Activated CD8-positive, alpha-beta T cell treated with anti-CD3 and anti-CD28 coated beads, Interleukin-2, amount 10 ng/mL, durations not matched to agents 7 days and 5 days (primary cell): ENCODE measurements at regions of chr22 and their contacts with region 1.

Region 1: GRCh38 chr22:17095538-17095937 is 10.7 kb downstream of the IL17RA start:
- DNase-seq: no peak
- ATAC-seq: no peak
- H3K4me3 Mint-ChIP-seq: no peak overlapping the region
- H3K27ac Mint-ChIP-seq: no peak overlapping the region
- H3K4me1 Mint-ChIP-seq: peaks cover 83% of the 10 kb centered on the region
- H3K27me3 Mint-ChIP-seq: no peaks in the 10 kb centered on the region

Region 2: GRCh38 chr22:17047656-17048055 is 47.9 kb before region 1 on chr22:
- CTCF ChIA-PET with region 1: no interaction called
- POLR2A ChIA-PET with region 1: no interaction called
- DNase-seq: no peak
- ATAC-seq: no peak
- H3K4me3 Mint-ChIP-seq: no peak overlapping the region
- H3K27ac Mint-ChIP-seq: no peak overlapping the region
- H3K4me1 Mint-ChIP-seq: no peaks in the 10 kb centered on the region
- H3K27me3 Mint-ChIP-seq: peaks cover 11% of the 10 kb centered on the region

Region 3: DNA sequence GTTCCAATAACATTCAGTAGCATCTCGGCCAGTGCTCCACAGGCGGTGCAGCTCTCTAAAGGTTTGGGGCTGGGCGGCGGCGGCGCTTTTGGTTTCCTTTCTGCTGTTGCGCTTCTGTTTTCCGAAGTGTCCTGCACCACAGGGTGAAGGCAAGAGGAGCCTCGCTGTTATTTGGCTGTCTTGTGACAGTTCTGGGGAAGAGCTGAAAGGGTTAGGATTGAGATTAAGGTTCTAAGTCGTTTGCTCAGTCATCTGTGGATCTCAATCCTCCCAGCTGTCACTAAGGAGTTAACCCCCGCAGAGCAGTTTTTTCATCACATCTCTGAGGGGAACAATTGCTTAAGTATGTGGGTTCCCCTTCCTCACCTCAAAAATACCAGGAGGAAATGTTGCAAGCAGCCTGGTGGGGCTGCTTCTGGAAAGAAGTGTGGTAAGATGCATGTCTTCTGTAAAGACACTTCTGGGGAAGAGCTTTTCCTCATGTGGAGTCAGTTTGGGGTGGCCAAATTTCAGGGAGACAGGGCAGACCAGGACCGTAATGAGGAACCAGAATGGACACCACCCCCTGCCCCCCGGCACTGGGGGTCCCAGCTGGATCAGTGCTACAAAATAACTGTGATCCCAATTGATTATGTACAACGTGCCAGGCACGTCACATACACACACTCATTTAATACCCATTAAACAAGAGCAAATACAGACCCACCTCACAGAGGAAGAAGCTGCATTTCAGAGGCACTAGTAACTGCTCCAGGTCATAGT is 11.4 kb after region 1 on chr22:
- CTCF ChIA-PET with region 1: interaction called, 11 read pairs
- POLR2A ChIA-PET with region 1: interaction called, 8 read pairs
- DNase-seq: peak; percentile 76
- ATAC-seq: peak; percentile 89
- H3K4me3 Mint-ChIP-seq: peak overlapping the region; percentile 73
- H3K27ac Mint-ChIP-seq: peak overlapping the region; percentile 91
- H3K4me1 Mint-ChIP-seq: peaks cover 30% of the 10 kb centered on the region
- H3K27me3 Mint-ChIP-seq: no peaks in the 10 kb centered on the region

Region 4: GRCh38 chr22:17188237-17188636 is 92.7 kb after region 1 on chr22:
- CTCF ChIA-PET with region 1: no interaction called
- POLR2A ChIA-PET with region 1: no interaction called
- DNase-seq: no peak
- ATAC-seq: no peak
- H3K4me3 Mint-ChIP-seq: no peak overlapping the region
- H3K27ac Mint-ChIP-seq: no peak overlapping the region
- H3K4me1 Mint-ChIP-seq: no peaks in the 10 kb centered on the region
- H3K27me3 Mint-ChIP-seq: no peaks in the 10 kb centered on the region